Aorta (tissue), 5 donors: ENCODE measurements at regions of chr19 and their contacts with region 1.

Region 1: GRCh38 chr19:39187559-39187957 is 9.2 kb upstream of the NCCRP1 start:
- DNase-seq: no peak
- ATAC-seq: no peak
- H3K4me3 ChIP-seq: no peak overlapping the region
- H3K27ac ChIP-seq: no peak overlapping the region
- H3K4me1 ChIP-seq: no peaks in the 10 kb centered on the region
- H3K27me3 ChIP-seq: no peaks in the 10 kb centered on the region

Region 2: DNA sequence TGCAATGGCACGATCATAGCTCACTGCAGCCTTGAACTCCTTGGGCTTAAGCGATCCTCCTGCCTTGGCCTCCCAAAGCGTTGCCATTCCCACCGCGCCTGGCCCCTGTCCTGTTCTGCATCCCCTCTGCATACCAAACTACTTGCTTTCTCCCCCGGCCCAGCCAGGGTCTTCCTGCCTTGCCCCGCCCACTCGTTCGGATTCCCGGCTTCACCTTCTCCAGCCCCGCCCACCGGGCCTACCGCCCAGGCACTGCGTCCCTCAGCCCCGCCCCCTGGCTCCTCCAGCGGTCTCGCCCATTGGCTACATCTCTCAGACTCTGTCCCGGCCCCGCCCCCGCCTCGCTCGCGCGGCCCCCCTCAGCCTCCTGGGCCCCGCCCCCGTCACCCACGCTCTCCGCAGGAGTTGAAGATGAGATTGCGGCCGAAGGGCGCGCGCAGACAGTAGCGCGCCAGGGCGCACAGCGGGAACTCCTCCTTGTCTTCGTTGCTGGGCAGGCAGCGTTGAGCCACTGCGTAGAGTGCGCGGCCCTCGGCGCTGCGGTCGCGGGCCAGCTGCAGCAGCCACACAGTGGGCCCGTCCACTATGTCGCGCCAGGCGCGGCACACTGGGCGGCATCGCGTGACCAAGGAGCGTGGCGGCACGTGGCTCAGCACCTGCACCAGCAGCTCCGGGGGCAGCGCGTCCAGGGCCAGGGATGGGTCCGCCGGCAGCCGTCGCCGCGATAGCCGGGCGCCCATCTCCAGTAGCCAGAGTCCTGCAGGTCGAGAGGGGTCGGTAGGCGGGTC is 237.8 kb before region 1 on chr19:
- intact Hi-C with region 1: no loop called
- DNase-seq: peak; percentile 90 to 95
- ATAC-seq: peak; percentile 84
- H3K4me3 ChIP-seq: no peak overlapping the region
- H3K27ac ChIP-seq: no peak overlapping the region
- H3K4me1 ChIP-seq: no peaks in the 10 kb centered on the region
- H3K27me3 ChIP-seq: no peaks in the 10 kb centered on the region

Region 3: DNA sequence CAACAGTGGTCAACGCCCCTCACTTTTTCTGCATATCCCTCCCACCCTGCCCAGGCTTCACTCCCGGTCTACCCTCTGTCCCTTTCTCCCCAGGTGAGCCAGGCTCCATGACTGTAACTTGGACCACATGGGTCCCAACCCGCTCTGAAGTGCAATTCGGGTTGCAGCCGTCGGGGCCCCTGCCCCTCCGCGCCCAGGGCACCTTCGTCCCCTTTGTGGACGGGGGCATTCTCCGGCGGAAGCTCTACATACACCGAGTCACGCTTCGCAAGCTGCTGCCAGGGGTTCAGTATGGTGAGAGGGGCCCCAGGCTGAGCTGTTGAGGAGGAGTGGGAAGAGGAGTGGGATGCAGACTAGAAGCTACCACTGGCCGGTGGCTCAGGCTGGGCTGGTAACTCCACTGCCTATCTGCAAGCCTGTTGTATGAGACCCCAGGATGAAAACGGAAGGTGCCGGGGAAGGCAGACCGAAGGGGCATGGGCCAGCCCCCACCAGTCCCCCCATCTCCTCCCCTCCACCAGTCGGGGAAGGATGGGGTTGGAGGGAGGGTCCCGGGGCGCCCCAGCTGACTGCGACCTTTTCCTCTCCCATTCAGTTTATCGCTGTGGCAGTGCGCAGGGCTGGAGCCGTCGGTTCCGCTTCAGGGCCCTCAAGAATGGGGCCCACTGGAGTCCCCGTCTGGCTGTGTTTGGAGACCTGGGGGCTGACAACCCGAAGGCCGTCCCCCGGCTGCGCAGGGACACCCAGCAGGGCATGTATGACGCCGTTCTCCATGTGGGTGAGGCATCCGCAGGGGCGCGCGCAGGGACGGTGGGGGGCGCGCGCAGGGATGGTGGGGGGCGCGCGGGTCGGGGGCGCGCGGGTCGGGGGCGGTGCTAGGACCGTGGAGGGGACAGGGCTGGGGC is 88.9 kb before region 1 on chr19:
- intact Hi-C with region 1: no loop called
- DNase-seq: no peak
- ATAC-seq: no peak
- H3K4me3 ChIP-seq: no peak overlapping the region
- H3K27ac ChIP-seq: no peak overlapping the region
- H3K4me1 ChIP-seq: no peaks in the 10 kb centered on the region
- H3K27me3 ChIP-seq: no peaks in the 10 kb centered on the region

Region 4: GRCh38 chr19:39125554-39126311 is 61.8 kb before region 1 on chr19 and contains the start of gene PAK4:
- intact Hi-C with region 1: loop called (anchors 1 to 5 kb)
- DNase-seq: peak; percentile 98 to 99
- ATAC-seq: peak; percentile 97
- H3K4me3 ChIP-seq: peak within 1 kb of the TSS; percentile 63 to 69
- H3K27ac ChIP-seq: no peak within 1 kb of the TSS
- H3K4me1 ChIP-seq: no peaks in the 10 kb centered on the region
- H3K27me3 ChIP-seq: no peaks in the 10 kb centered on the region
- total RNA-seq, gene PAK4: 15.9 to 22.2 TPM